ENCODE measurements at regions of chr3 and their contacts with region 1.

Region 1: GRCh38 chr3:9915254-9916141 is 1.4 kb upstream of the IL17RC start:
- DNase-seq: peak; percentile 78 to 86 (median 80)
- ATAC-seq: peak; percentile 42 to 70 (median 66)
- H3K4me3 ChIP-seq: peak overlapping the region; percentile 49 to 87 (median 65)
- H3K27ac ChIP-seq: peak overlapping the region; percentile 73 to 96 (median 91)
- H3K4me1 ChIP-seq: peaks cover 4 to 42% (median 30%) of the 10 kb centered on the region in 12 donors
- H3K27me3 ChIP-seq: no peaks in the 10 kb centered on the region
- CTCF ChIP-seq: peak in 10 of 12 donors; percentile 8 to 63 (median 40)
- POLR2A ChIP-seq: peak in 1 of 2 donors; percentile 37

Region 2: GRCh38 chr3:9503283-9503682 is 412.2 kb before region 1 on chr3:
- intact Hi-C with region 1: loop called in 1 of 10 experiments (anchors 5 kb)
- DNase-seq: peak; percentile 27 to 77 (median 46)
- ATAC-seq: peak in 2 of 4 donors; percentile 35 to 48
- H3K4me3 ChIP-seq: no peak overlapping the region
- H3K27ac ChIP-seq: no peak overlapping the region
- H3K4me1 ChIP-seq: peaks cover 0 to 13% (median 7%) of the 10 kb centered on the region in 12 donors
- H3K27me3 ChIP-seq: peaks cover 0 to 37% (median 15%) of the 10 kb centered on the region in 9 donors
- CTCF ChIP-seq: peak; percentile 80 to 89 (median 86)
- POLR2A ChIP-seq: no peak

Region 3: GRCh38 chr3:9809615-9810432 is 105.7 kb before region 1 on chr3 and contains the start of gene TTLL3:
- intact Hi-C with region 1: loop called in 1 of 10 experiments (anchors 5 kb)
- DNase-seq: peak; percentile 77 to 90 (median 79)
- ATAC-seq: peak; percentile 57 to 86 (median 80)
- H3K4me3 ChIP-seq: peak within 1 kb of the TSS; percentile 48 to 98 (median 84)
- H3K27ac ChIP-seq: peak within 1 kb of the TSS; percentile 72 to 98 (median 94)
- H3K4me1 ChIP-seq: peaks cover 0 to 23% (median 7%) of the 10 kb centered on the region in 12 donors
- H3K27me3 ChIP-seq: no peaks in the 10 kb centered on the region
- CTCF ChIP-seq: peak in 1 of 12 donors; percentile 4
- POLR2A ChIP-seq: peak in 1 of 2 donors; percentile 67
- total RNA-seq, gene TTLL3: 7.0 to 30.3 (median 11.8) TPM

Region 4: DNA sequence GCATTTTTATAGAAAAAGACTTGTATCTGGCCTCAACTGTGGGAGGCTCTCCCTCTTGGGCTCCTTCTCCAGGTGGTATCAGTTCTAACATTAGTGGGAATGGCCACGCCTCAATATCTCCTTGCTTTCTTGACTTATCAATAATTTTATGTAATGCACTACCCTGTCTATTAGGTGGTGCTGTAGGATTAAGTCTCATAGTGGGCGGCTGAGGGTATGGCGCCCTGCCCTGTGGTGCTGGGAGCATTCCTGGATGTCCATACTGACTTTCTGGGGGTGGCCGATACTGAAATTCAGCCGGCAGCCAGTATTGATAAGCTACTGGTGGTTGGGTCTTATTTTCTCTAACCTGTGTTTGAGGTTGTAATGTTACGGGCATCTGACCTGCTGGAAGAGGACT is 62.9 kb before region 1 on chr3:
- intact Hi-C with region 1: loop called in 2 of 10 experiments (anchors 5 to 10 kb)
- DNase-seq: no peak
- ATAC-seq: no peak
- H3K4me3 ChIP-seq: no peak overlapping the region
- H3K27ac ChIP-seq: no peak overlapping the region
- H3K4me1 ChIP-seq: no peaks in the 10 kb centered on the region
- H3K27me3 ChIP-seq: no peaks in the 10 kb centered on the region
- CTCF ChIP-seq: no peak
- POLR2A ChIP-seq: no peak

Region 5: DNA sequence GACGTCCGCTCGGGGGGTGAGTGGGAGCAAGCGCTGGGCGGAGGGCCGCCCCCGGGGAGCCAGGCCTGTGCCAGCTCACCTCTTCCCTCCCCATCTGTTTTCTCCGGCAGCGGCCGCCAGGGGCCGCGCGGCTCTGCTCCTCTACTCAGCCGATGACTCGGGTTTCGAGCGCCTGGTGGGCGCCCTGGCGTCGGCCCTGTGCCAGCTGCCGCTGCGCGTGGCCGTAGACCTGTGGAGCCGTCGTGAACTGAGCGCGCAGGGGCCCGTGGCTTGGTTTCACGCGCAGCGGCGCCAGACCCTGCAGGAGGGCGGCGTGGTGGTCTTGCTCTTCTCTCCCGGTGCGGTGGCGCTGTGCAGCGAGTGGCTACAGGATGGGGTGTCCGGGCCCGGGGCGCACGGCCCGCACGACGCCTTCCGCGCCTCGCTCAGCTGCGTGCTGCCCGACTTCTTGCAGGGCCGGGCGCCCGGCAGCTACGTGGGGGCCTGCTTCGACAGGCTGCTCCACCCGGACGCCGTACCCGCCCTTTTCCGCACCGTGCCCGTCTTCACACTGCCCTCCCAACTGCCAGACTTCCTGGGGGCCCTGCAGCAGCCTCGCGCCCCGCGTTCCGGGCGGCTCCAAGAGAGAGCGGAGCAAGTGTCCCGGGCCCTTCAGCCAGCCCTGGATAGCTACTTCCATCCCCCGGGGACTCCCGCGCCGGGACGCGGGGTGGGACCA is 17.5 kb after region 1 on chr3:
- intact Hi-C with region 1: loop called in 2 of 10 experiments (anchors 1 to 2 kb)
- DNase-seq: peak; percentile 80 to 91 (median 85)
- ATAC-seq: peak; percentile 41 to 86 (median 78)
- H3K4me3 ChIP-seq: peak overlapping the region; percentile 35 to 92 (median 74)
- H3K27ac ChIP-seq: peak overlapping the region; percentile 74 to 98 (median 93)
- H3K4me1 ChIP-seq: peaks cover 7 to 40% (median 23%) of the 10 kb centered on the region in 12 donors
- H3K27me3 ChIP-seq: no peaks in the 10 kb centered on the region
- CTCF ChIP-seq: peak; percentile 48 to 84 (median 66)
- POLR2A ChIP-seq: peak in 1 of 2 donors; percentile 5

Region 6: GRCh38 chr3:9957214-9957613 is 41.7 kb after region 1 on chr3:
- intact Hi-C with region 1: no loop called
- DNase-seq: no peak
- ATAC-seq: no peak
- H3K4me3 ChIP-seq: no peak overlapping the region
- H3K27ac ChIP-seq: no peak overlapping the region
- H3K4me1 ChIP-seq: peaks cover 0 to 3% (median 0%) of the 10 kb centered on the region in 12 donors
- H3K27me3 ChIP-seq: peaks cover 0 to 1% (median 0%) of the 10 kb centered on the region in 9 donors
- CTCF ChIP-seq: no peak
- POLR2A ChIP-seq: no peak

Region 7: GRCh38 chr3:10108091-10108490 is 192.6 kb after region 1 on chr3 and contains the start of gene FANCD2OS:
- intact Hi-C with region 1: no loop called
- DNase-seq: no peak
- ATAC-seq: no peak
- H3K4me3 ChIP-seq: no peak within 1 kb of the TSS
- H3K27ac ChIP-seq: no peak within 1 kb of the TSS
- H3K4me1 ChIP-seq: no peaks in the 10 kb centered on the region
- H3K27me3 ChIP-seq: peaks cover 0 to 9% (median 0%) of the 10 kb centered on the region in 9 donors
- CTCF ChIP-seq: no peak
- POLR2A ChIP-seq: no peak
- total RNA-seq, gene FANCD2OS: not detected